GM10248 (cell line): ENCODE measurements at regions of chr18 and their contacts with region 1.

Region 1: GRCh38 chr18:47748847-47749599 is 181.4 kb downstream of the SMAD2 start:
- DNase-seq: peak; percentile 89
- CTCF ChIP-seq: peak; percentile 100

Region 2: GRCh38 chr18:47110492-47111274 is 638.3 kb before region 1 on chr18:
- CTCF ChIA-PET with region 1: interaction called, 11 read pairs
- POLR2A ChIA-PET with region 1: no interaction called
- DNase-seq: no peak
- CTCF ChIP-seq: no peak

Region 3: GRCh38 chr18:47215554-47216138 is 533.4 kb before region 1 on chr18:
- CTCF ChIA-PET with region 1: interaction called, 40 read pairs
- POLR2A ChIA-PET with region 1: no interaction called
- DNase-seq: peak; percentile 13
- CTCF ChIP-seq: peak; percentile 61

Region 4: DNA sequence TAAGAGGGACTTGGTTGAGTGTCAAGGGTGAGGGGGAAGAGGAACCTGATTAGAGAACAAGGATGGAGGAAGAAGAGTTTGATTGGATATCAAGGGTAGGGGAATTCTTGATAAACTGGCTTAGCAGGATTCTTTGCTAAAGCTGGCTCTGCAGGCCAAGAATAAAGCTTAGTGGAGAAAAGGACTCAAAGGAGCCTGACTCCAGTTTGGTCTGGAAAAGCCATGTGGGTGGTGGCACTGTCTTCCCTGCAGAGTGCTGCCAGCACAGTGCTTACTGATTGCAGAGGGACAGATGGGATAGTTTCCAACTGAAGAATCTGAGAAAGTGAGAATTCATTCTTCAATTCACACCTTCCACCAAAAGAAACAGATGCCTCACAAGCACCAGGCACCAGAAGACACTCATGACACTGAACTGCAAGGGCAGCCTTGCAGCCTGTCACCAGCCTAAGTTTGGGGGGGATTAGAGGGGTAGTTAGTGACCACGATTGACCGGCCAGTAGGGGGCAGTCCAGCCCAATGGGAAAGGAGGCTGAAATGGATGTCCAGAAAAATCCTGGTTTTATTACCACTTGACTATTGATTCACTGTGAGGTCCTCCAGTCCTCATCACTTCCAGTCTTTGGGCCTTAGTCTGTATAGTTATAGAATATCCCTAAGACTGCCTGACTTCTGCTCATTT is 153.1 kb before region 1 on chr18:
- CTCF ChIA-PET with region 1: interaction called, 79 read pairs
- POLR2A ChIA-PET with region 1: no interaction called
- DNase-seq: peak; percentile 65
- CTCF ChIP-seq: peak; percentile 70

Region 5: DNA sequence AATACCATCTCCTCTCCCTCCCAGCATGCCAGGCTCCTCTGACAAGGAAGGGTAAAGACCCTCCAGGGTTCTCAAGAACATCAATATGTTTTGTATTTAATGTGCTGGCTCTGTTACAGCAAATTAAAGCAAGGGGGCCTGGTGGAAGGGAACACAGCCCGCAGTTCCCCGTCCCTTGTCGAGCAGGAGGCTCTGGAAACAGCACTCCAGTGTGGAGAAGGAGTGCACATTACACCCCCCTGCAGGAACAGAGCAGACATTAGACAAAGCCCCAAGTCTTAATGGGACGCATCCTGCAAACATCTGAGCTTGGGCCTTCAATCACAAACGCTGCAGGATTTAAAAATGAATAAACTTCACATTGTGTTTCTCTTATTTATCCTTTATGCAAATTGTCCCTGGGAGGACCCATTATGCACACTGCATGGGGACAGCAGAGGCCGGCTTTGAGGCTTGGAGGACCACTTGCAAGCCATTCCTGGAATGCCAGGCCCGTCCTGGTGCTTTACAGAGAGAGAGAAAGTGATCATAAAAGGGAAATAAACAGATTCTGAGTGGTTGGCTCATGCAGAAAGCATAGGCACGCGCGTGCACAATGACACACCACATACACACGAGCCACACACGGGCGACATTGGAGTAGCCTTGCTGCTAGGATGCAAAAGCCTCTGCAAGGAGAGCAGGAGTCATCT is 147.3 kb before region 1 on chr18:
- CTCF ChIA-PET with region 1: interaction called, 79 read pairs
- POLR2A ChIA-PET with region 1: no interaction called
- DNase-seq: no peak
- CTCF ChIP-seq: no peak

Region 6: GRCh38 chr18:47737956-47738355 is 11.1 kb before region 1 on chr18:
- CTCF ChIA-PET with region 1: interaction called, 14 read pairs
- POLR2A ChIA-PET with region 1: no interaction called
- DNase-seq: no peak
- CTCF ChIP-seq: no peak

Region 7: DNA sequence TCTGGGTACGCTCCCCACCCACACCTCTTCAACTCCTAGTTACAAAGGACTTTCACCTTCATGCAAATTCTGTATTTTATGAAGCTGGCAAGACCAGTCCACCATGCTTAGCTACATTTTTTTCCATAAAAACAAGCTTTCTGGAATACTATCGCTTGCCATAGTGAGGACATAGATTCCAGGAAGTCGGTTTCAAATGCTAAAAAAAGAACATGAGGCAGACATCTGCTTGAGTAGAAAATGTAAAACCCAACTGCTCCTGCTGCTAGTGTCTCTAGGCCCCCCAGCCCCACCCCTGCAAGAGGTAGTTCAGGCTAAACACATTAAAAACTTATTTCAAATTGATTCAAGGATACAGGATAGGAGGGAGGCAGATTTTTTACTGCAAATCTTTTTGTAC is 32.5 kb after region 1 on chr18:
- CTCF ChIA-PET with region 1: no interaction called
- POLR2A ChIA-PET with region 1: no interaction called
- DNase-seq: no peak
- CTCF ChIP-seq: no peak

Region 8: DNA sequence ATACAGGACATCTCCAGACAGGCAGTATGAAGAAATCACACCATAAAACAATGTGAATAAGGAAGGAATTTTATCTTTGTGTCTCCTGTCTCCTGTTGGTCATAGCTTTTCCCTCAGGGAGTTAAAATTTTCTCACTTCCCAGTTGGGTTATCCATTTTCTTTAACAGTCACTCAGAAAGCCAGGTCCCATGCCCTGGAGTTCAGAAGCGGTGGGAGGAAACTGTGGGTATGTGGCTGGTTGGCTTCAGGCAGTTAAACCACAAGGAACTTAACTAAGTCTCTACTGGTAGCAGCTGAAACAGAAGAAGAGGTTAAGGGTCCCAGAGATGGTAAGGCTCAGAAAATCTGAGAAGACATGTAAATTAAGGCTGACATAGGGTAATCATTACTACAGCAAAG is 188.0 kb after region 1 on chr18:
- CTCF ChIA-PET with region 1: no interaction called
- POLR2A ChIA-PET with region 1: no interaction called
- DNase-seq: no peak
- CTCF ChIP-seq: no peak